ENCODE measurements at regions of chr9 and their contacts with region 1.

Region 1: GRCh38 chr9:21056931-21057330 is 20.8 kb downstream of the IFNB1 start:
- DNase-seq: no peak

Region 2: GRCh38 chr9:20997503-20998076 is 59.3 kb before region 1 on chr9:
- in situ Hi-C with region 1: no loop called
- DNase-seq: no peak

Region 3: GRCh38 chr9:21096172-21096900 is 39.4 kb after region 1 on chr9:
- in situ Hi-C with region 1: loop called (anchors 5 kb)
- DNase-seq: no peak

Measured in G401 (cell line).